Ovary (tissue), 10 donors: ENCODE measurements at regions of chr9 and their contacts with region 1.

Region 1: GRCh38 chr9:137757613-137758029 is 120.0 kb upstream of the CACNA1B start:
- DNase-seq: no peak
- H3K4me3 ChIP-seq: no peak overlapping the region
- H3K27ac ChIP-seq: no peak overlapping the region
- H3K4me1 ChIP-seq: peaks cover 14% of the 10 kb centered on the region
- H3K27me3 ChIP-seq: no peaks in the 10 kb centered on the region
- CTCF ChIP-seq: no peak
- EP300 ChIP-seq: no peak
- POLR2A ChIP-seq: no peak

Region 2: DNA sequence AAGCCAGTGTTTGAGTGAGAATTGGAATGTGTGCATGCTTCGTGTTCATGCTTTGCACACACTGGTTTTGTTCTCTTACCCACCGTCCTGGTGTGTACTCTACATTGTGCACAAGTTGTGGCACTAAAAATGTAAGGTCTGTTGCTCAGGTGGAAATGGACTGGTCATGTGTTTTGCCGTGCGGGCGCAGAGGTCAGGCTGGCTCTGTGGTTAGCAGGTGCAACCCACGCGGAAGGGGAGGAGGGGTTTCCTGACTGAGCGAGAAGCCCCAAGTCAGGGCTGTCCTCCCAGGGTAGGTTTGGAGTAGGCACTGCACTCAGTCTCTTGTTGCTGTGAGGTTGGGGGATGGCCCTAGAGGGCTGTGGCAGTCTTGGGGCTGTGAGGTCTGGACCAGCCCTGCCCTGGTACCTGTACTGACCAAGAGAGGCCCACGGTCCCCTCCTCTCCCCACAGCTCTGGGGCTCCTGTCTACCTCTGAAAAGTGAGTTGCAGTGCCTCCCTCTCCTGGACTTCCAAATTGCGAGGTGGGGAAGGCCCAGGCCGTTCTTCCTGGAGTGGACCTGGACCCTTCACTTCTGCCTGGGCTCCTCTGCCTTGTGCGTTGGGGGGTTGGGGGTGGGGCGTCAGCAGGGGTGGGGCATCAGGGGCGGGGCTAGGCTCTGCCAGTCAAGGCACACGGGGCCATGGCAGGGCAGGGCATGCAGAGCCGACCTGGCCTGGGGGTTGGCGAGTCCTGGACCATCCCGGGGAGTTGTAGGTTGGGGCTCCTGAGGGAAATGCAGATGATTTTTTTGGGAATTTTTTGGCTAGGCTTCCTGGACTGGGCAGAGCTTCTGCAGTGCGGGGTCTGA is 52.0 kb before region 1 on chr9:
- intact Hi-C with region 1: no loop called
- DNase-seq: no peak
- H3K4me3 ChIP-seq: no peak overlapping the region
- H3K27ac ChIP-seq: no peak overlapping the region
- H3K4me1 ChIP-seq: peaks cover 23% of the 10 kb centered on the region
- H3K27me3 ChIP-seq: no peaks in the 10 kb centered on the region
- CTCF ChIP-seq: no peak
- EP300 ChIP-seq: no peak
- POLR2A ChIP-seq: no peak

Region 3: DNA sequence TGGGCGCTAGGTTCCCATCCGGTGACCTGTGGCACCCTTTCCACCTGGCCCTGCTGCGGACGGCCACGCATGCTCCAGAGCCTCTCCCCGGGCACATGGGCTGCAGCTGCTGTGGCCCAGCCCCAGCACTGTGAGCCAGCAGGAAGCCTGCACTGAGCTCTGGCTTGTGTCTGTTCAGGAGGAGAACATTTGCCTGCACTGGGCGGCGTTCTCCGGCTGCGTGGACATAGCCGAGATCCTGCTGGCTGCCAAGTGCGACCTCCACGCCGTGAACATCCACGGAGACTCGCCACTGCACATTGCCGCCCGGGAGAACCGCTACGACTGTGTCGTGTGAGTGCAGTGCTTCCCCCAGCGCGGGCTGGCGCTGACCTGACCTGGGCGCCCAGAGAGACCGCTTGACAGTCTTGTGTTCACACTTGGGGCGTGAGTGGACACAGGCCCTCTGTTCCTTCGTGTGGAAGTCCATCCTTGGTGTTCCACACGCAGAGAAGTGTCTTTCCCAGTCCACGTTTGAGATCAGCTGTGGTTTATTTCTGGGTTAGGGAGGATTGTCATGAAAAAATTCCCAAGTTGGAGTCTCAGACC is 53.8 kb after region 1 on chr9:
- intact Hi-C with region 1: loop called in 1 of 4 experiments (anchors 2 kb)
- DNase-seq: no peak
- H3K4me3 ChIP-seq: no peak overlapping the region
- H3K27ac ChIP-seq: no peak overlapping the region
- H3K4me1 ChIP-seq: no peaks in the 10 kb centered on the region
- H3K27me3 ChIP-seq: no peaks in the 10 kb centered on the region
- CTCF ChIP-seq: no peak
- EP300 ChIP-seq: no peak
- POLR2A ChIP-seq: no peak